Transverse colon (tissue), 4 donors: ENCODE measurements at regions of chr14 and their contacts with region 1.

Region 1: DNA sequence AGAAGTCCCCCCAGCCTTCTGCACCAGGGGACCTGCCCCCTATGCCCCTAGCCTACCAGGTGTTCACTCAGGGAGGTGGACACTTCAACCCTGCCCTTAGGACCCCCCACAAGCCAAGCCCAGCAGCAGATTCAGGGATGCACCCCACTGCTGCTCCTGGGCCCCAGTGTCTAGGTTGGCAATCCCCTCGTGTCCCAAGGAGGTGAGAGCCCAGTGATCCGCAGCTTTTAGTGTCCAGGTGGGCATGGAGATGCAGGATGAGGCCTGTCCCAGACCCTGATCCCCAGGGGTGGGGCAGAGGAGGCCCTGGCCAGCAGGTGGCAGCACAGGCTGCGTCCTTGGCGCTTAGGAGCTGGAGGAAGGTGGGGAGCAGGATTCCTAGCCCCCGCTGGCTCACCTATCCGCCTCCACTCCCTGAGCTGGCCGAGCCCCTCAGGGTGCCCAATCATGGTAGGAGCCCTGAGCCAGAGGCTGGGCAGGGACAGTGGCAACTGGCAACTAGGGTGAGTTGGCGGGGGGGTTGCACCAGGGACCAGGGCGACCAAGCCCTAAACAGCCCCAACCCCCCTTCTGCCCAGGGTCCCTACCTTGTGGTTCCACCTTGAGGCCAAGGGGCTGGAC is 4.1 kb downstream of the CKB start:
- DNase-seq: peak; percentile 80
- H3K4me3 ChIP-seq: no peak overlapping the region
- H3K27ac ChIP-seq: peak overlapping the region; percentile 89 to 95 (median 92)
- H3K4me1 ChIP-seq: peaks cover 31 to 54% (median 41%) of the 10 kb centered on the region in 4 donors
- H3K27me3 ChIP-seq: peaks cover 10% of the 10 kb centered on the region
- CTCF ChIP-seq: peak; percentile 91 to 97 (median 95)
- EP300 ChIP-seq: no peak
- POLR2A ChIP-seq: no peak

Region 2: DNA sequence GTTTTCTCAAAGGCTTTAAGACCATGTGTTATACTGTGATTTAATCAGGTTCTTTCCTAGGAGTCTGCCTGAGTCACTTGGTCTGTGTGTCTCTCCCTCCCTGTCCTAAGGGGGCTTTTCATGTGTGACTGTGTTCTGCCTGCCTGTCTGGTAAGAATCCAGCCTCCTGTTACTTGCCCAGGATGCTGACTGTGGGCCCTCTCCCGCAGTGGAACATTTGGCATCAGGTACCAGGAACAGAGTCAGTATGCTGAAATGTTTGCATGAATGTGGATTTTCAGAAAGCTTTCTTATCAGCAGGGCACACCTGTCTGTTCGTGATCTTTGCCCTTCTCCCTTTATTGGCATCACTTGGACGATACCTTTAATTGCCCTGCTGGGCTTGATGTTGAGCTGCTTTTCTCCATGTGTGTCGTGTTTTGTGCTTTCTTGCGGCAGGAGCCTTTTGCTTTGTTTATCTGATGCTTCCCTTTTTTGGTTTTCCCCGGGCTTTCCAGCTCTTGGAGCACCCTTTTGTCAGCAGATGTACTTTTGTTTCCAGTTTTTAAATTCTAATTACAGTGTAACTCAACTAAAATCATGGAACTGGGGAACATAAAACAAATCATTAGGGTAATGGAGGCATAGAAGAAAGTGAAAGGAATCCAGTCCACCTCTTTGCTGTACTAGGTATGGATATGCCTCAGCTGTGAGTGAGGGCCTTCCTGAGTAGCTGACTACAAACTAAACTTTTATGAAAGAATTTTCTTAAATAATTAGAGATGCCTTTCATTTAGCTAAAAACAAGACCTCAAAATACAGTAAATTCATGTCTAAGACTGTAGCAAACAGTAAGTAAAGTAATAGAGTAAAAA is 668.8 kb before region 1 on chr14:
- in situ Hi-C with region 1: no loop called
- intact Hi-C with region 1: no loop called
- DNase-seq: peak; percentile 63
- H3K4me3 ChIP-seq: peak overlapping the region in 3 of 4 donors; percentile 3 to 42 (median 13)
- H3K27ac ChIP-seq: peak overlapping the region; percentile 78 to 90 (median 88)
- H3K4me1 ChIP-seq: peaks cover 6 to 33% (median 28%) of the 10 kb centered on the region in 4 donors
- H3K27me3 ChIP-seq: no peaks in the 10 kb centered on the region
- CTCF ChIP-seq: no peak
- EP300 ChIP-seq: peak; percentile 83
- POLR2A ChIP-seq: no peak

Region 3: GRCh38 chr14:103546652-103547454 is 28.3 kb after region 1 on chr14:
- in situ Hi-C with region 1: no loop called
- intact Hi-C with region 1: loop called (anchors 2 kb)
- DNase-seq: peak; percentile 79
- H3K4me3 ChIP-seq: no peak overlapping the region
- H3K27ac ChIP-seq: no peak overlapping the region
- H3K4me1 ChIP-seq: peaks cover 45 to 67% (median 54%) of the 10 kb centered on the region in 4 donors
- H3K27me3 ChIP-seq: no peaks in the 10 kb centered on the region
- CTCF ChIP-seq: peak; percentile 84 to 98 (median 92)
- EP300 ChIP-seq: no peak
- POLR2A ChIP-seq: no peak

Region 4: GRCh38 chr14:103699901-103700752 is 181.6 kb after region 1 on chr14:
- in situ Hi-C with region 1: no loop called
- intact Hi-C with region 1: no loop called
- DNase-seq: no peak
- H3K4me3 ChIP-seq: no peak overlapping the region
- H3K27ac ChIP-seq: no peak overlapping the region
- H3K4me1 ChIP-seq: peaks cover 21 to 38% (median 29%) of the 10 kb centered on the region in 4 donors
- H3K27me3 ChIP-seq: no peaks in the 10 kb centered on the region
- CTCF ChIP-seq: no peak
- EP300 ChIP-seq: no peak
- POLR2A ChIP-seq: no peak